Activated CD8-positive, alpha-beta T cell treated with anti-CD3 and anti-CD28 coated beads for 36 hours (primary cell): ENCODE measurements at regions of chr3 and their contacts with region 1.

Region 1: GRCh38 chr3:46558184-46559043 is 7.7 kb downstream of the LRRC2 start:
- DNase-seq: peak; percentile 79
- ATAC-seq: peak; percentile 94
- H3K4me3 Mint-ChIP-seq: peak overlapping the region; percentile 63
- H3K27ac Mint-ChIP-seq: no peak overlapping the region
- H3K4me1 Mint-ChIP-seq: peaks cover 13% of the 10 kb centered on the region
- H3K27me3 Mint-ChIP-seq: peaks cover 2% of the 10 kb centered on the region
- CTCF ChIP-seq: peak; percentile 69

Region 2: GRCh38 chr3:46496741-46497554 is 61.5 kb before region 1 on chr3:
- CTCF ChIA-PET with region 1: interaction called, 26 read pairs
- POLR2A ChIA-PET with region 1: interaction called, 3 read pairs
- intact Hi-C with region 1: no loop called
- DNase-seq: peak; percentile 76
- ATAC-seq: peak; percentile 37
- H3K4me3 Mint-ChIP-seq: no peak overlapping the region
- H3K27ac Mint-ChIP-seq: no peak overlapping the region
- H3K4me1 Mint-ChIP-seq: peaks cover 6% of the 10 kb centered on the region
- H3K27me3 Mint-ChIP-seq: no peaks in the 10 kb centered on the region
- CTCF ChIP-seq: peak; percentile 36

Region 3: DNA sequence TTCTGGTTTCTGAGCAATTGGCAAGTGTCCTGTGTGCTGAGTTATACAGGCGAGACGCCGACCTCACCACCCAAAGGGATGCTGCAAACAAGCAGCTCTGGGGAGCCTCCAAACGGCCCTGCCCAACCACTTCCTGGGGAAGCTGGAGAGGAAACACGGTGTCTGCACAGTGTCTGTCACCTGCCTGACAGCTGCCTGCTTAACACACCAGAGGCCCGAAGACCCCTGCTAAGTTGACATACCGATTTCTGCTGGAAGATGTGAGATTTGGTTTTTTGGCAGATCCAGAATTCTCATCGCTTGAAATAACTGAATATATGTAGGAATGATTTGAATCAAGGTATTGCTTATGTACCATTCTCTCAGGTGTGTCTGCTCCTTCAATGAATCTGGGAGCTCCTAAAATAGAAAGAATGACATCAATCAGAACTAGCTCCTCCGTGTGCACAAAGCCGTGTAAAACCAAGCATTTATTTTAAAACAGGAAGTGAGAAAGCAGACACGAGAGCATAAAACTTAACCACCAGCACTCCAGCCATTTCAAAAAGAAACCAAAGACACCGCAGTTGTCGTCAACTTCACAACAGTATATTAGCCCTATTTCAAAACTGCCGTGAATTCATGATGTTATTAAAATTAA is 19.5 kb before region 1 on chr3:
- CTCF ChIA-PET with region 1: interaction called, 11 read pairs
- POLR2A ChIA-PET with region 1: interaction called, 4 read pairs
- intact Hi-C with region 1: no loop called
- DNase-seq: peak; percentile 89
- ATAC-seq: peak; percentile 93
- H3K4me3 Mint-ChIP-seq: peak overlapping the region; percentile 66
- H3K27ac Mint-ChIP-seq: peak overlapping the region; percentile 81
- H3K4me1 Mint-ChIP-seq: peaks cover 46% of the 10 kb centered on the region
- H3K27me3 Mint-ChIP-seq: peaks cover 2% of the 10 kb centered on the region
- CTCF ChIP-seq: no peak